ENCODE measurements at regions of chr13 and their contacts with region 1.

Region 1: GRCh38 chr13:110971486-110971885 is 56.6 kb upstream of the ANKRD10 start:
- DNase-seq: no peak
- ATAC-seq: no peak
- H3K4me3 ChIP-seq: no peak overlapping the region
- H3K27ac ChIP-seq: no peak overlapping the region
- H3K4me1 ChIP-seq: no peaks in the 10 kb centered on the region
- H3K27me3 ChIP-seq: peaks cover 0 to 1% of the 10 kb centered on the region in 2 experiments; a peak in 2 of 5 replicates
- CTCF ChIP-seq: no peak
- EP300 ChIP-seq: no peak
- POLR2A ChIP-seq: no peak
- RAD21 ChIP-seq: no peak

Region 2: GRCh38 chr13:110371550-110372465 is 599.7 kb before region 1 on chr13:
- CTCF ChIA-PET with region 1: no interaction called
- POLR2A ChIA-PET with region 1: no interaction called
- in situ Hi-C with region 1: no loop called
- intact Hi-C with region 1: loop called (anchors 5 kb)
- DNase-seq: no peak
- ATAC-seq: no peak
- H3K4me3 ChIP-seq: no peak overlapping the region
- H3K27ac ChIP-seq: no peak overlapping the region
- H3K4me1 ChIP-seq: no peaks in the 10 kb centered on the region
- H3K27me3 ChIP-seq: peaks cover 3 to 45% of the 10 kb centered on the region in 2 experiments; a peak in 2 of 5 replicates
- CTCF ChIP-seq: no peak
- EP300 ChIP-seq: no peak
- POLR2A ChIP-seq: no peak
- RAD21 ChIP-seq: no peak